A673 (cell line): ENCODE measurements at regions of chr12 and their contacts with region 1.

Region 1: GRCh38 chr12:38373784-38374183 is 57.2 kb downstream of the ALG10B start:
- DNase-seq: no peak
- H3K4me3 ChIP-seq: no peak overlapping the region
- H3K27ac ChIP-seq: no peak overlapping the region
- H3K4me1 ChIP-seq: no peaks in the 10 kb centered on the region
- H3K27me3 ChIP-seq: no peaks in the 10 kb centered on the region
- CTCF ChIP-seq: no peak

Region 2: DNA sequence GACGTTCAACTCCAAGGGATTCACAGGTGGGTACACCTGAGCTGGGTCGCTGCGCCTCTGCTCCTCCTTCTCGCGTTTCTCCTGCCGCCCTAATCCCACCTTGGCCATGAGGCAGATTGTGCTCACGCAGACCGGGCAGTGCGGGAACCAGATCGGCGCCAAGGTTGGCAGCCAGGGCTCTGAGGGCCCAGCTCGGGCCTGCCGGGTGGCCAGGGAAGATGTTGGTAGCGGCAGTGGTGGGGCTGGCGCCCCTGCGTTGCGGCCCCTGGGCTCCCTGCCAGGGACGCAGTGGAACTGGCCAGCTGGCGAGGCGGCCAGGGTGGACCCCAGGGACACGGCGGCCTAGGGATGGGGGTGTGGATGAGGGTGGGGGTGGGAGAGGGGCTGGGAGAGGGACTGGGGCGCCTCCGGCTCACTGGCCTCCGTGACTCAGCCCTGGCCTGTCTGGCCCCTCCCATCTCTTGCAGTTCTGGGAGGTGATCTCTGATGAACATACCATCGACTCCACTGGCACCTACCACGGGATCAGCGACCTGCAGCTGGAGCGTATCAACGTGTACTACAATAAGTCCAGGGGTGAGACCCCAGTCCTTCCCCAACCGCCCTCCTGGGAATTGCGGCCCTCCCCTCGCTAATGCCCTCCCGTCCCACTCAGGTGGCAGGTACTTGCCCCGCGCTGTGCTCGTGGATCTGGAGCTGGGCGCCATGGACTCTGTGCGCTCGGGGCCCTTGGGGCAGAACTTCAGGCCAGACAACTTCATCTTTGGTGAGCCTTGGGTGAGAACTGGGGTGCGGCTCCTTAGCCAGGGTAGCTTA is 172.1 kb before region 1 on chr12:
- CTCF ChIA-PET with region 1: no interaction called
- POLR2A ChIA-PET with region 1: no interaction called
- intact Hi-C with region 1: no loop called
- DNase-seq: no peak
- H3K4me3 ChIP-seq: no peak overlapping the region
- H3K27ac ChIP-seq: no peak overlapping the region
- H3K4me1 ChIP-seq: no peaks in the 10 kb centered on the region
- H3K27me3 ChIP-seq: no peaks in the 10 kb centered on the region
- CTCF ChIP-seq: no peak

Region 3: DNA sequence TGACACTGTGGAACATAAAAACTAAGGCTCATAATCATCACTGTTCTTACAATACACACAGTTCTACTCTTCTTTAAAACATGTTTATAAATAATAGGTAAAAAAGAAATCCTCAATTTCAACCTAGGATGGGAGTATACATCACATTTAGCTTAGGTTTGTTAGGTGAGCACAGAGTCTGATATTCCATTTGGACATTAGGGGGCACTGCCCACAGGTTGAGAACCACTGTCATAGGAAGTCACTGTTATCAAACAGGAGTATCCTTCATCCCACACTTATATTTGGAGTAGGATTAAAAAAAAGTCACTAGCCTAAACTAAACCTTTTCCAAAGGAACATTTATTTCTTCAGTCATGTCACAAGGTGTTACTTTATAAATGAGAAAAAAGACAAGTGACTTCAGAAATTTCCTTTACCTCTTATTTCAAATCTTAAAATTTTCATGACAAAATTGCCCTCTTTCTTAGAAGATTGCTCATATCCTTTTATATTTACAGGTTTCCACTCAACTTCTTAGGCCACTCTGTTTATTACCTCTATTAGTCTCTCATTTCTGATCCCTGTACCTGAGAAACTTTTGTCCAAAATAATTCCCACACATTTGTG is 291.0 kb after region 1 on chr12:
- CTCF ChIA-PET with region 1: no interaction called
- POLR2A ChIA-PET with region 1: no interaction called
- intact Hi-C with region 1: loop called (anchors 10 kb)
- DNase-seq: peak; percentile 17
- H3K4me3 ChIP-seq: no peak overlapping the region
- H3K27ac ChIP-seq: no peak overlapping the region
- H3K4me1 ChIP-seq: no peaks in the 10 kb centered on the region
- H3K27me3 ChIP-seq: no peaks in the 10 kb centered on the region
- CTCF ChIP-seq: peak; percentile 56